Ovary (tissue), 10 donors: ENCODE measurements at regions of chr1 and their contacts with region 1.

Region 1: GRCh38 chr1:199684686-199685273 is 342.7 kb upstream of the NR5A2 start:
- DNase-seq: no peak
- H3K4me3 ChIP-seq: no peak overlapping the region
- H3K27ac ChIP-seq: no peak overlapping the region
- H3K4me1 ChIP-seq: no peaks in the 10 kb centered on the region
- H3K27me3 ChIP-seq: no peaks in the 10 kb centered on the region
- CTCF ChIP-seq: peak in 1 of 3 donors; percentile 27
- EP300 ChIP-seq: no peak
- POLR2A ChIP-seq: no peak

Region 2: DNA sequence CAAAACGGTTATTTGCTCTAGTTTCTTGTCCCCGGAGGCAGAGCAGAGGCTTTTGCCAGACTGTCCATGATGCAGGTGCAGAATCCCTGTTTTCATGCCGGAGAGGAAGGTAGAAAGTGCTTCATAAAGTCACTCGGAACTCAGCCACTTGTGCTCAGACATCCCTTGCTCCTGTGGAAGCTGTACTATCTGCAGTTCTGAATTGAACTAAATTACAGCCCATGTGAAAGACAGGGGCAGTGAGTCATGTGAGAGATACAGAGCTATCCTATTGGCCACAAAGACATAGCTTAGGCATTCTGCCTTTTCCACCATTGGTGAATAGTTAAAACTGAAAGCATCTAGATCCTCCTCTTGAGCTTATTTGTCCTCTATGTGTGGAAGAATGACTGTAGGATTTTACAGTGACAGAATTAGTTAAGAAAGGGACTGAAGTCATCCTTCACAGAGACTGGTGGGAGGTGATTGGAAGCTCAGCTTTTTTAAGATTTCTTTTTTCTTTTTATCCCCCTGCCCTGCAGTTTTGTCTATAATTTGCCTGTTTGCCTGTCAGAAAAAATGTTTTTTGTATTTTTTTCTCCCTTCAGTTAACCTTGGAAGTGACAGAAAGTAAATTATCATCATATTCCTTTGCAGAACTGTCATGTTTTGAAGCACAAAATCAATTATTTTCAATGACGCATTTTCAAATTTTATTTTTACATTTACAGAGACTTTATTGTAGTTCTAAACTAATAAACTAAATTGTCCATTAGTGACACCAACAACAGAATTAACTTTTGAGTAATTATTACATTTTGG is 747.3 kb before region 1 on chr1:
- intact Hi-C with region 1: no loop called
- DNase-seq: no peak
- H3K4me3 ChIP-seq: peak overlapping the region; percentile 17
- H3K27ac ChIP-seq: no peak overlapping the region
- H3K4me1 ChIP-seq: peaks cover 1% of the 10 kb centered on the region
- H3K27me3 ChIP-seq: no peaks in the 10 kb centered on the region
- CTCF ChIP-seq: no peak
- EP300 ChIP-seq: no peak
- POLR2A ChIP-seq: no peak

Region 3: GRCh38 chr1:200488375-200489165 is 803.8 kb after region 1 on chr1:
- intact Hi-C with region 1: loop called in 1 of 4 experiments (anchors 10 kb)
- DNase-seq: peak in 1 of 5 donors; percentile 36
- H3K4me3 ChIP-seq: no peak overlapping the region
- H3K27ac ChIP-seq: no peak overlapping the region
- H3K4me1 ChIP-seq: no peaks in the 10 kb centered on the region
- H3K27me3 ChIP-seq: no peaks in the 10 kb centered on the region
- CTCF ChIP-seq: peak in 1 of 3 donors; percentile 46
- EP300 ChIP-seq: no peak
- POLR2A ChIP-seq: no peak

Region 4: GRCh38 chr1:201640624-201641023 is 1955.8 kb after region 1 on chr1:
- intact Hi-C with region 1: no loop called
- DNase-seq: peak; percentile 37 to 76 (median 66)
- H3K4me3 ChIP-seq: no peak overlapping the region
- H3K27ac ChIP-seq: no peak overlapping the region
- H3K4me1 ChIP-seq: peaks cover 7% of the 10 kb centered on the region
- H3K27me3 ChIP-seq: no peaks in the 10 kb centered on the region
- CTCF ChIP-seq: no peak
- EP300 ChIP-seq: no peak
- POLR2A ChIP-seq: no peak